A549 (cell line): ENCODE measurements at regions of chr18 and their contacts with region 1.

Region 1: GRCh38 chr18:31942999-31943865 is at the start of gene TRAPPC8:
- DNase-seq: peak; percentile 84 to 97
- ATAC-seq: peak; percentile 97 to 98
- H3K4me3 ChIP-seq: peak within 1 kb of the TSS; percentile 65
- H3K27ac ChIP-seq: peak within 1 kb of the TSS; percentile 81 to 97
- H3K4me1 ChIP-seq: peaks cover 15% of the 10 kb centered on the region; the same call in 2 of the 3 replicates
- CTCF ChIP-seq: no peak
- EP300 ChIP-seq: no peak
- POLR2A ChIP-seq: peak; percentile 55
- RAD21 ChIP-seq: peak in 1 of 2 experiments; percentile 41; a peak in 1 of 5 replicates
- polyA plus RNA-seq, gene TRAPPC8: 41.8 and 58.8 TPM in 2 replicates

Region 2: GRCh38 chr18:32092422-32093101 is 149.3 kb after region 1 on chr18:
- CTCF ChIA-PET with region 1: no interaction called
- POLR2A ChIA-PET with region 1: interaction called, 23 read pairs
- DNase-seq: peak; percentile 79 to 96
- ATAC-seq: peak; percentile 90 to 94
- H3K4me3 ChIP-seq: peak overlapping the region; percentile 81
- H3K27ac ChIP-seq: peak overlapping the region; percentile 87 to 100
- H3K4me1 ChIP-seq: peaks cover 13% of the 10 kb centered on the region
- CTCF ChIP-seq: no peak
- EP300 ChIP-seq: no peak
- POLR2A ChIP-seq: peak; percentile 48
- RAD21 ChIP-seq: no peak